Naive thymus-derived CD4-positive, alpha-beta T cell (primary cell): ENCODE measurements at regions of chr6 and their contacts with region 1.

Region 1: DNA sequence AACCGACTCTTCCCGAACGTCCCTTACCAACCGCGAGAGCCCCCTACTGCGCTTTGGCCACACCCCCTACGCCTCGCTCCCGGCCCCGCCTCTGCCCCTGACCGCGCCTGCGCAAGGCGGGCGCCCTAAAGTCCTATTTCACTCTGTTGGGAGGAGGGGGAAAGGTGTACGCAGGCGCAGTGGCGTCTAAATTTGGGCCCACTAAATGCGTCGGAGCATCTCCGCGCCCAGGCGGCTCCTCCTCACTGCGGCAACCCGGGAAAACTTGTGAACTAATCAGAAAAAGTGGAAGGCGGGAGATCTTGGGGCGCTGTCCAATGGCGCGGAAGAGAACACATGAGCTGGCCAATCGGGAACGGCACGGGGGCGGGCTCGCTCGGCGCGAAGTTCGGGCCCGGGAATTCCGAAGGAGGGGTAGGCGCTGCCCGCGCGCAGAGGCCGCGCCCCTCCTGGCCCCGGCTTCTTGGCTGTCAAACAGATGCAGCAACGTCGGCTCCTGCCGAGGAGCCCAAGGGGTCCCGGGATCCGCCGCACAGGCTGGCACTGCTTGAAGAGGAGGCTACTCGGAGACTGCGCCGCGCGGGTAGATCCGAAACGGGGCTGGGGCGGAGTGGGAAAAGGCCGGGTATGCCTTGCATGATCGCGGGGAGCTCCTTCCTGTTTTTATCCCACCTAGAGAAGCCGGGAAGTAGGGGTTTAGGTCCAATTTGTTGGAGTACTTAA is at the start of gene TCF19:
- DNase-seq: peak; percentile 97 to 99 (median 98)
- ATAC-seq: peak; percentile 96
- H3K4me3 ChIP-seq: peak within 1 kb of the TSS; percentile 82
- H3K4me3 Mint-ChIP-seq: peak within 1 kb of the TSS; percentile 82 to 97 (median 91)
- H3K27ac ChIP-seq: peak within 1 kb of the TSS; percentile 82
- H3K27ac Mint-ChIP-seq: peak within 1 kb of the TSS; percentile 62 to 96 (median 89)
- H3K4me1 ChIP-seq: peaks cover 12 to 18% of the 10 kb centered on the region in 2 donors
- H3K4me1 Mint-ChIP-seq: peaks cover 21 to 56% (median 29%) of the 10 kb centered on the region in 7 donors
- H3K27me3 ChIP-seq: no peaks in the 10 kb centered on the region
- H3K27me3 Mint-ChIP-seq: peaks cover 0 to 2% (median 0%) of the 10 kb centered on the region in 5 donors
- total RNA-seq, gene TCF19: 4.3 to 78.9 (median 9.4) TPM

Region 2: DNA sequence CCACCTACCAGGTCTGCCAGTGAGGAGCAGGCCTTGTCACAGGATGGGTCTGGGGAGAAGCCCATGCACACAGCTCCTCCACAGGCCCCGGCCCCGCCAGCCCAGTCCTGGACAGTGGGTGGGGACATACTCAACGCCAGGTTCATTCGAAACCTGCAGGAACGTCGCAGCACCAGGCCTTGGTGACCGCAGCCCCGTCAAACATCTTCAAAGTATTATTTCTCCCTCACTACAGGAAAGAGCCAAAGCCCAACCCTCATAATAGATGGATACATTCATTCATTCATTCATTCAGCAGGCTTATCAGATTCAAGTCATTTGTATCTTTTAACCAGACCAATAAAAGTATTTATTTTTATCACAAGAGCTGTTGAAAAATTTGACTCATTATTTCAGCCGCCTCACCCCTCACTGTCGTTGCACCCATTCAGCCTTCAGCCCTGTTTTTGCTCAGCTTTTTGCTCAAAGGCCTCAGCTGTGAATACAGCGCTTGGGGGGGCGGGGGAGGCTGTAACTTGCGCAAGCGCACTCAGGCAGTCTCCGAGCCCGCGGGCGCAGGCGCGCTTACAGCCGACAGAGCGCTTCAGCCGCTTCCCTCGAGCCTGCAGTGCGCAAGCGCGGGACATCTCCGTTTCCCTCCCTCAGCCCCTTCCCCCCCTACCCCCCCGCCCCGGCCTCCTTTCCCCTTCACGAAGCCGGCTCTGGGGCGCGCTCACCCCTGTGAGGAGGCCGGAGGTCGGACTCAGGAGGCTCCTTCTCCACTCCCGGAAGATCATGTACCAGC is 511.7 kb before region 1 on chr6 and contains the start of gene C6orf136:
- CTCF ChIA-PET with region 1: no interaction called
- POLR2A ChIA-PET with region 1: no interaction called
- intact Hi-C with region 1: loop called in 1 of 2 experiments (anchors 5 kb)
- DNase-seq: peak in 8 of 9 donors; percentile 77 to 94 (median 92)
- ATAC-seq: peak; percentile 90
- H3K4me3 ChIP-seq: peak within 1 kb of the TSS; percentile 93
- H3K4me3 Mint-ChIP-seq: peak within 1 kb of the TSS; percentile 82 to 93 (median 88)
- H3K27ac ChIP-seq: peak within 1 kb of the TSS; percentile 91
- H3K27ac Mint-ChIP-seq: peak within 1 kb of the TSS; percentile 79 to 93 (median 91)
- H3K4me1 ChIP-seq: peaks cover 11 to 17% of the 10 kb centered on the region in 2 donors
- H3K4me1 Mint-ChIP-seq: peaks cover 24 to 38% (median 32%) of the 10 kb centered on the region in 7 donors
- H3K27me3 ChIP-seq: no peaks in the 10 kb centered on the region
- H3K27me3 Mint-ChIP-seq: no peaks in the 10 kb centered on the region
- total RNA-seq, gene C6orf136: 23.7 to 38.0 (median 32.1) TPM

Region 3: DNA sequence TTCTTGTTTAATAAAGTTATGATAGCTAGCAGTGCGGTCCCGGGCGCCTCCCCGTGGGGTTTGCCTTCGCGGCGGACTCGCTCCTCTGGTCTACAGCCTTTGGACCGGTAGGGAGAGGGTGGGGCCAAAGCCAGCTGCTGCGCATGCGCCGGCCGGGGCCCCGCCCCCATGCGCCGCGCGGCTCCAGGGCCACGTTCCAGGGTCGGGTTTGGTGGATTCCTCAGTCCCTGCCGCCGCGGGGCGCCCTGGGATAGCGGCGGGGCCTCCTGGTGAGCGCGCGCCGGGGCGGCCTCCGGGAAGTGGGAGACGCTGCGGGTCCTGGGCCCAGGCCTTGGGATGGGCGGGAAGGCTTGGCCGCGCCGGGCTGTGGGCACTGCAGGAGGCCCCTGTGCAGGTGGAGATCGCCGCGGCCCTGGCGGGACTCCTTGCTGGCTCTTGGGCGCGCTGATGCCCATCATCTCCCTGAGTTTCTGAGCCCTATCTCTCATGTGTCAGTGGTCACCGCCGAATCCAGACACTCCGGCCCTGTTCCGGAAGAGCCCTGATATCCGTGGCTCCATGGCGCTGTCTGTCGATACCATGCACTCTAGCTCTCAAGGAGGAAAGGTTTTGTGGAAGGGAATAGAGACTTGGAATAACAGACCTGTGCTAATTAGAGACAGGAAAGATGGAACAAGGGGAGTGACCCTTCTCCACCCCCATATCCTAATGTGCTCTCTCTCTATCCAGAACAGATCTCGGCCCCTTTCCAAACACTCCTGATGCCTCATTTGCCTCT is 244.0 kb before region 1 on chr6 and contains the start of gene VARS2:
- CTCF ChIA-PET with region 1: no interaction called
- POLR2A ChIA-PET with region 1: no interaction called
- intact Hi-C with region 1: loop called in 1 of 2 experiments (anchors 2 kb)
- DNase-seq: peak; percentile 80 to 95 (median 86)
- ATAC-seq: peak; percentile 98
- H3K4me3 ChIP-seq: peak within 1 kb of the TSS; percentile 64
- H3K4me3 Mint-ChIP-seq: peak within 1 kb of the TSS; percentile 87 to 96 (median 92)
- H3K27ac ChIP-seq: peak within 1 kb of the TSS; percentile 78
- H3K27ac Mint-ChIP-seq: peak within 1 kb of the TSS; percentile 81 to 93 (median 88)
- H3K4me1 ChIP-seq: peaks cover 13 to 17% of the 10 kb centered on the region in 2 donors
- H3K4me1 Mint-ChIP-seq: peaks cover 20 to 51% (median 40%) of the 10 kb centered on the region in 7 donors
- H3K27me3 ChIP-seq: no peaks in the 10 kb centered on the region
- H3K27me3 Mint-ChIP-seq: no peaks in the 10 kb centered on the region
- total RNA-seq, gene VARS2: 22.2 to 47.3 (median 37.9) TPM

Region 4: GRCh38 chr6:31035857-31036497 is 122.3 kb before region 1 on chr6:
- CTCF ChIA-PET with region 1: no interaction called
- POLR2A ChIA-PET with region 1: no interaction called
- intact Hi-C with region 1: no loop called
- DNase-seq: no peak
- ATAC-seq: no peak
- H3K4me3 ChIP-seq: no peak overlapping the region
- H3K4me3 Mint-ChIP-seq: no peak overlapping the region
- H3K27ac ChIP-seq: no peak overlapping the region
- H3K27ac Mint-ChIP-seq: no peak overlapping the region
- H3K4me1 ChIP-seq: no peaks in the 10 kb centered on the region
- H3K4me1 Mint-ChIP-seq: no peaks in the 10 kb centered on the region
- H3K27me3 ChIP-seq: no peaks in the 10 kb centered on the region
- H3K27me3 Mint-ChIP-seq: peaks cover 0 to 27% (median 0%) of the 10 kb centered on the region in 5 donors

Region 5: DNA sequence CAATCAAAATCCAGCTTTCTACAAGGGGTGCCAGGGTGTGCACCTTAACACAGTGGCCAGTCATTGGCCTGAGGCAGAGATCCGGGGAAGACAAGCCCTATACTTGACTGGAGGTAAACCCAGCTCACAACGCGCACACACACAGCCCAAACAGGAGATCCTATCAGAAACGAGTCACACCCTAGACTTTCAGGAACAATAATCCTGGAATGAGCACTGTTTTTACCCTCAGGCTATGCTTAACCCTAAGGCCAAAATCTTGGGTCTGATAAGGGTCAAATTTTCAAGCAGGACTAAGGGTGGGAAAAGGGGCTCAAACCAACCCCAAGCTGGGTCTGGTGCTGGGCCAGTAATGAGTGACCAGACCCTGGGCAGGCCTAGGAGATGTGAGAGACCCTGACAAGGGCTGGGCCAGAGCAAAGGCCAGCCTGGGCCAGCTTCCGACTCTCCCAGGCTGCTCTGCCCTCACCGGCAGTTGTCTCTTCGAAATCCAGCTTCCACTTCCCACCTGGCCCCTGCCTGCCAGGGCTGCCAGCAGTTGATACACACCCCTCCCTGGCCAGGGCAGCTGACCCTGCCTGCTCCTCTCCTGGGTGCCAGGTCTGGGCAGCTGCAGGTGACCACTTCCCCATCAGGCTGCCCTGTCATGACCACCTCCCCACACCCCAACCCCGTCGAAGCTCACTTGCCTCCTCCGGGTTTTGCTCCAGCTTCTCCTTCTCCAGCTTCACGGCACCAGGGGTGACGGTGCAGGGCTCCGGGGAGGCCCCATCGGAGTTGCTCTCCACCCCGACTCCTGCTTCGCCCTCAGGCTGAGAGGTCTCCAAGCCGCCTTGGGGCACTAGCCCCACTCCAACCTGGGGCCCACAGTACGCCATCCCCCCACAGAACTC is 11.5 kb after region 1 on chr6:
- CTCF ChIA-PET with region 1: no interaction called
- POLR2A ChIA-PET with region 1: interaction called, 13 read pairs
- intact Hi-C with region 1: no loop called
- DNase-seq: no peak
- ATAC-seq: no peak
- H3K4me3 ChIP-seq: no peak overlapping the region
- H3K4me3 Mint-ChIP-seq: no peak overlapping the region
- H3K27ac ChIP-seq: no peak overlapping the region
- H3K27ac Mint-ChIP-seq: no peak overlapping the region
- H3K4me1 ChIP-seq: no peaks in the 10 kb centered on the region
- H3K4me1 Mint-ChIP-seq: peaks cover 0 to 4% (median 0%) of the 10 kb centered on the region in 7 donors
- H3K27me3 ChIP-seq: no peaks in the 10 kb centered on the region
- H3K27me3 Mint-ChIP-seq: no peaks in the 10 kb centered on the region

Region 6: DNA sequence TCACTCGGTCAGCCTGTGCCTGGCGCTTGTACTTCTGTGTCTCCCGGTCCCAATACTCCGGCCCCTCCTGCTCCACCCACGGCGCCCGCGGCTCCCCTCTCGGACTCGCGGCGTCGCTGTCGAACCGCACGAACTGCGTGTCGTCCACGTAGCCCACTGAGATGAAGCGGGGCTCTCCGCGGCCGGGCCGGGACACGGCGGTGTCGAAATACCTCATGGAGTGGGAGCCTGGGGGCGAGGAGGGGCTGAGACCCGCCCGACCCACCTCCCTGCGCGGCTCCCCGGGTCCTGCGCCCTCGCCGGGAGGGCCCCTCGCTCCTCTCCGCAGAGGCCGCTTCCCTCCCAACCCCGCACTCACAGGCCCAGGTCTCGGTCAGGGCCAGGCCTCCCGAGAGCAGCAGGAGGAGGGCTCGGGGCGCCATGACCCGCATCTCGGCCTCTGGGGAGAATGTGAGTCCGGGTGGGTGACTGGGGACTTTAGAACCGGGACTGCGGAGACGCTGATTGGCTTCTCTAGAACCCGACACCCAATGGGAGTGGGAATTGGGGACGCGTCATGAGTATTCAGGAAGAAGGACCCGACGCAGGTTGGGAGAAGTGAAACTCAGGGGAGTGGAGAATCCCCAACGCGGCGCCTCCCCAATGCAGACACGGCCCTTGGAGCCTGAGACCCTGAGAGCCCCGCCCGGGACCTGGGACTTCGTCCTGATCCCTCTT is 113.5 kb after region 1 on chr6 and contains the start of gene HLA-C:
- CTCF ChIA-PET with region 1: no interaction called
- POLR2A ChIA-PET with region 1: interaction called, 3 read pairs
- intact Hi-C with region 1: loop called (anchors 1 kb)
- DNase-seq: peak; percentile 78 to 96 (median 92)
- ATAC-seq: peak; percentile 90
- H3K4me3 ChIP-seq: peak within 1 kb of the TSS; percentile 83
- H3K4me3 Mint-ChIP-seq: peak within 1 kb of the TSS; percentile 89 to 100 (median 94)
- H3K27ac ChIP-seq: peak within 1 kb of the TSS; percentile 99
- H3K27ac Mint-ChIP-seq: peak within 1 kb of the TSS; percentile 99 to 100 (median 100)
- H3K4me1 ChIP-seq: peaks cover 25 to 41% of the 10 kb centered on the region in 2 donors
- H3K4me1 Mint-ChIP-seq: peaks cover 53 to 69% (median 62%) of the 10 kb centered on the region in 7 donors
- H3K27me3 ChIP-seq: no peaks in the 10 kb centered on the region
- H3K27me3 Mint-ChIP-seq: peaks cover 0 to 19% (median 0%) of the 10 kb centered on the region in 5 donors
- total RNA-seq, gene HLA-C: 1,349 to 2,513 (median 1,489) TPM